ENCODE measurements at regions of chr22 and their contacts with region 1.

Region 1: GRCh38 chr22:40636380-40637182 is at the start of gene MRTFA:
- DNase-seq: peak; percentile 98 to 100 (median 99)
- H3K4me3 ChIP-seq: peak within 1 kb of the TSS; percentile 95 to 98
- H3K4me3 Mint-ChIP-seq: peak within 1 kb of the TSS; percentile 96 to 99 (median 98)
- H3K27ac ChIP-seq: peak within 1 kb of the TSS; percentile 85
- H3K27ac Mint-ChIP-seq: peak within 1 kb of the TSS; percentile 92 to 99 (median 98)
- H3K4me1 ChIP-seq: peaks cover 34% of the 10 kb centered on the region
- H3K4me1 Mint-ChIP-seq: peaks cover 23 to 54% (median 32%) of the 10 kb centered on the region in 4 donors
- H3K27me3 ChIP-seq: no peaks in the 10 kb centered on the region
- H3K27me3 Mint-ChIP-seq: no peaks in the 10 kb centered on the region
- total RNA-seq, gene MRTFA: 79.1 to 91.6 TPM

Region 2: GRCh38 chr22:39917776-39918495 is 718.6 kb before region 1 on chr22:
- CTCF ChIA-PET with region 1: no interaction called
- POLR2A ChIA-PET with region 1: no interaction called
- intact Hi-C with region 1: no loop called
- DNase-seq: no peak
- H3K4me3 ChIP-seq: peak overlapping the region in 1 of 2 donors; percentile 38
- H3K4me3 Mint-ChIP-seq: peak overlapping the region; percentile 60 to 89 (median 79)
- H3K27ac ChIP-seq: peak overlapping the region; percentile 55
- H3K27ac Mint-ChIP-seq: peak overlapping the region in 6 of 7 donors; percentile 90 to 96 (median 92)
- H3K4me1 ChIP-seq: peaks cover 98% of the 10 kb centered on the region
- H3K4me1 Mint-ChIP-seq: peaks cover 78 to 99% (median 89%) of the 10 kb centered on the region in 4 donors
- H3K27me3 ChIP-seq: no peaks in the 10 kb centered on the region
- H3K27me3 Mint-ChIP-seq: peaks cover 0 to 1% of the 10 kb centered on the region in 2 donors

Region 3: DNA sequence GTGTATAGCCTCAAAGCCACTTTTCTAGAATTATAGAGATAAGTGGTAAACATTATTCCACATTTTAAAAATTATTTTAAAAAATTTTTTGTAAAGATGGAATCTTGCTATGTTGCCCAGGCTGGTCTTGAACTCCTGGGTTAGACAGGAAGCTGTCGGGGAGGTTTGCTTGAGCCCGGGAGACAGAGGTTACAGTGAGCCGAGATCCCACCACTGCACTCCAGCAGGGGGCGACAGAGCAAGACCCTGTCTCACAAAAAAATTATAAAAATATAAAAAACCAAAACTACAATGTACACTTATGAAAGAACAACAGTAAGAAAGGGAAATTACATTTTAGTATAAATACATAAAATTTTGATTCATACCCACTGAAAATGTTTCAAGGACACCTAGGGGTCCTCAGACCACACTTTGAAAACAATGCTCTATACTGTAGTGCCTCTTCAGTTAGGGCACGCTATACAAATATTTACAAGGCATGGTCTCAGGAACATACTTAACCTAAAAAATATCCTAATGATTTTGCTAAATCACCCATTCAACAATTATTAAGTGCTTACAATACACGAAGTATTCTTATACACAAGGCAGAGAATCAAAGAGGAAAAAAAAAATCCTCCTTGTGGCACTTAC is 111.2 kb before region 1 on chr22:
- CTCF ChIA-PET with region 1: interaction called, 13 read pairs
- POLR2A ChIA-PET with region 1: interaction called, 58 read pairs
- intact Hi-C with region 1: loop called (anchors 2 kb)
- DNase-seq: peak; percentile 68 to 73 (median 69)
- H3K4me3 ChIP-seq: no peak overlapping the region
- H3K4me3 Mint-ChIP-seq: no peak overlapping the region
- H3K27ac ChIP-seq: no peak overlapping the region
- H3K27ac Mint-ChIP-seq: peak overlapping the region in 5 of 7 donors; percentile 16 to 87 (median 63)
- H3K4me1 ChIP-seq: peaks cover 22% of the 10 kb centered on the region
- H3K4me1 Mint-ChIP-seq: peaks cover 23 to 46% (median 31%) of the 10 kb centered on the region in 4 donors
- H3K27me3 ChIP-seq: no peaks in the 10 kb centered on the region
- H3K27me3 Mint-ChIP-seq: no peaks in the 10 kb centered on the region

Region 4: DNA sequence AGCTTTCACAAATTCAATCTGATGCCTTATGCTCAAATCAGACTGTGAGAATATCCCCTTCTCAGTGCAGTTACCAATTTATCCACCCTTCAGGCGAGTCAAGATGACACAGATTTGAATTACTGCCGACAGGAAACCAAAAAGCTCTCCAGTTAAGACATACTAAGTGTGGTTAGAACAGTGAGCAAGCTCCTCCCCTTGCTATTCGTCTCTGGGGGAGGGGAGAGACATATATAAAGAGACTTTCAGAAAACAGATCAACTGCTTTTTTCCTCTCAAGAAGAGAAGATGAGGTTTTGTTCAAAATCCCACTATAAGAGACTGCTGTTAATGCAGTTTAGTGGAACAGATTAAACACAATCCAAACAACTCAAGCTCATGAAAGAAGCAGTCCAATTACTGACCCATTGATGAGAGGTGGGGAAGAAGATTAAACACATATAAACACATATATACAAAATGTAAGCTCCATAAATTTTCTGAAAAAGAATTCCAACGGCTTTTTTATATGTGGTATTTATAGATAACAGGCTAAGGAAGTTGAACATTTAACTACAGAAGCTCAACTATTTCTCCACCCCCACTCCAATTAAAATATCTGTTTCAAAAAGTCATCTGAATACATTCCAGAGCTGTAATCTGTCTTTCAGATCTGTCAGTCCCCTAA is 102.7 kb before region 1 on chr22:
- CTCF ChIA-PET with region 1: interaction called, 7 read pairs
- POLR2A ChIA-PET with region 1: interaction called, 58 read pairs
- intact Hi-C with region 1: loop called (anchors 2 kb)
- DNase-seq: peak; percentile 71 to 83 (median 77)
- H3K4me3 ChIP-seq: peak overlapping the region; percentile 32 to 61
- H3K4me3 Mint-ChIP-seq: peak overlapping the region; percentile 81 to 93 (median 87)
- H3K27ac ChIP-seq: peak overlapping the region; percentile 50
- H3K27ac Mint-ChIP-seq: peak overlapping the region; percentile 86 to 94 (median 92)
- H3K4me1 ChIP-seq: peaks cover 67% of the 10 kb centered on the region
- H3K4me1 Mint-ChIP-seq: peaks cover 49 to 64% (median 60%) of the 10 kb centered on the region in 4 donors
- H3K27me3 ChIP-seq: no peaks in the 10 kb centered on the region
- H3K27me3 Mint-ChIP-seq: no peaks in the 10 kb centered on the region

Region 5: DNA sequence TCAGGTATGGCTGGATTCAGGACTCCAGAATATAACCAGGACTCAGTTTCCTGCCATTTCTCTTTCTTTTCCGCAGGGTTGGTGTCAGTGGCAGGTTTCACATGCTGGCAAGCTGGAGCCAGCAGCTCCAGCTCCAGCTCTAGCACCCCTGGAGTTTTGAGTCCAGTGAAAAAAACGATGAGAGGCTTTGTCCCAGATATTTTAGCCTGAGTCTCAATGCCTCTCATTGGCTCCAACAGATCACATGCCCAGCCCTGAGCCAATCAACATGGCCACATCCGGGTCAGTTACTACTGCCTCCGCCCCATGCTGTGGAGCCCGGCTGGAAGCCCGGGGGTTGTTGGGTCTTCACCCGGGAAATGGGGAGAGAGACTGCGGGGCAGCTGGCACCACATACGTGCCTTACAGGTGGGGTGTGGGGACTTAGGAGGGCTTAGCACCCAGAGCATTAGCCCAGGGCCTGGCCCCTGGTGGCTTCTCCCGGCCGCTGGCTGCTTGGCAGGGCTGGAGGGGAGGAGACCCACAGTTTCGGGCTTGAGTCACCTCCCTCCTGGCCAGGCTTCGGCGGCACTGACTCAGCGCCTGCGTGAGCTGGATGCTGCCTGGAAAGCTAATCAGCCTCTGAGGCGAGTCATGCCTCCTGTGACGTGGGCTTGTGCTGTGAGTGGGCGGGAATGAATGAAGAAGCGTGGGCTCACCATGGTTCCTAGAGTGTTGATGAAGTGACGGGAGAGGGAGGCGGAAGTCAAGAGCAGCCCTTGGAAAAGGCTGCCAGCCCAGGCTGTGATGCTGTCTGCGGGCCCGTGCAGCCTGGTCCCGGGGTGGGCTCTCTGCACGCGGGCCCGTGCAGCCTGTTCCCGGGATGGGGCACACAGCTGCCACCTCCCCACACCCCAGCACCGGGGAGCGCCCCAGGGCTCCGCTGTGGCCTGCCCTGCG is 15.3 kb after region 1 on chr22:
- CTCF ChIA-PET with region 1: interaction called, 29 read pairs
- POLR2A ChIA-PET with region 1: interaction called, 10 read pairs
- intact Hi-C with region 1: no loop called
- DNase-seq: peak; percentile 72 to 89 (median 76)
- H3K4me3 ChIP-seq: peak overlapping the region in 1 of 2 donors; percentile 62
- H3K4me3 Mint-ChIP-seq: peak overlapping the region; percentile 78 to 92 (median 88)
- H3K27ac ChIP-seq: peak overlapping the region; percentile 60
- H3K27ac Mint-ChIP-seq: peak overlapping the region; percentile 61 to 94 (median 91)
- H3K4me1 ChIP-seq: peaks cover 4% of the 10 kb centered on the region
- H3K4me1 Mint-ChIP-seq: peaks cover 7 to 18% (median 12%) of the 10 kb centered on the region in 4 donors
- H3K27me3 ChIP-seq: no peaks in the 10 kb centered on the region
- H3K27me3 Mint-ChIP-seq: no peaks in the 10 kb centered on the region

Region 6: GRCh38 chr22:40818747-40819598 is 182.4 kb after region 1 on chr22 and contains the start of gene SLC25A17:
- CTCF ChIA-PET with region 1: no interaction called
- POLR2A ChIA-PET with region 1: no interaction called
- intact Hi-C with region 1: loop called (anchors 2 kb)
- DNase-seq: peak; percentile 81 to 84 (median 82)
- H3K4me3 ChIP-seq: peak within 1 kb of the TSS; percentile 92 to 95
- H3K4me3 Mint-ChIP-seq: peak within 1 kb of the TSS; percentile 92 to 99 (median 97)
- H3K27ac ChIP-seq: peak within 1 kb of the TSS; percentile 81
- H3K27ac Mint-ChIP-seq: peak within 1 kb of the TSS; percentile 82 to 98 (median 95)
- H3K4me1 ChIP-seq: peaks cover 27% of the 10 kb centered on the region
- H3K4me1 Mint-ChIP-seq: peaks cover 29 to 46% (median 36%) of the 10 kb centered on the region in 4 donors
- H3K27me3 ChIP-seq: no peaks in the 10 kb centered on the region
- H3K27me3 Mint-ChIP-seq: no peaks in the 10 kb centered on the region
- total RNA-seq, gene SLC25A17: 15.4 to 15.6 TPM

Region 7: DNA sequence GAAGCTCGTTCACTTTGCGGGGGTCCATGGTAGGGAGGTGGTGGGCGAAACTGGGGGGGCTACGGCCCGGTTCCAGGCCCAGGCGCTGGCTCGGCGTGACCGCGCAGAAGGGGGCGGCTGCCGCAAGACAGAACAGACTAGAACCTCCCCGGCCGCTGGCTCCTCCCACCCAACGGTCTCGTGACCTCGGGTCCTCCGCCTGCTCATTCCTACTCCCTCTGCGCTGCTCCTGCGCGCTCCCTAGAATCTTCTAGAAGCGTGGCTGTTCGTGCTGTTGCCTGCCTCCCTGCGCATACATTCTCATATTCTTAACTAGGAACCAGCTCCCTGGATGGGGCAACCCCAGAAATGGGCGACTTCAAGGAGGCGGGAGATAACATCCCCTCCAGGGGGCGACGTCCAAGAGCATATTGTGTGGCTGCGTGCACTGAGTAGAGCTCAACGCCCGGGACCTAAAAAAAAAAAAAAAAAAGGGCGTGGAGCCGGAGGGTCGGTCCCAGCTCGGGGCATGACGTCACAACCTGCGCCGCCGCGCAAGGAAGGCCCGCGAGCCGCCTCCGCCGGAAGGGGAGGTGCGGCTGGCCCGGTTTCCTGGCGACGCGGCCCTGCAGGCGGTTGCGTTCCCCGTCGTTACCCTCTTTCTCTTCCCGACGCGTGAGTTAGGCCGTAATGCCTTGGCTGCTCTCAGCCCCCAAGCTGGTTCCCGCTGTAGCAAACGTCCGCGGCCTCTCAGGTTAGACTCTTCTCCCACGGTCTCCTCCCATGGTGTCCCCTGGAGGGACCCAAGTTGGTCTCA is 220.1 kb after region 1 on chr22 and contains the starts of genes ST13 and XPNPEP3:
- CTCF ChIA-PET with region 1: no interaction called
- POLR2A ChIA-PET with region 1: interaction called, 9 read pairs
- intact Hi-C with region 1: loop called (anchors 2 kb)
- DNase-seq: peak; percentile 97 to 98 (median 98)
- H3K4me3 ChIP-seq: peak within 1 kb of the TSS; percentile 72 to 100
- H3K4me3 Mint-ChIP-seq: peak within 1 kb of the TSS; percentile 96 to 99 (median 98)
- H3K27ac ChIP-seq: peak within 1 kb of the TSS; percentile 99
- H3K27ac Mint-ChIP-seq: peak within 1 kb of the TSS; percentile 98 to 100 (median 100)
- H3K4me1 ChIP-seq: peaks cover 53% of the 10 kb centered on the region
- H3K4me1 Mint-ChIP-seq: peaks cover 23 to 66% (median 45%) of the 10 kb centered on the region in 4 donors
- H3K27me3 ChIP-seq: no peaks in the 10 kb centered on the region
- H3K27me3 Mint-ChIP-seq: peaks cover 0 to 2% of the 10 kb centered on the region in 2 donors
- total RNA-seq, gene ST13: 161 to 168 TPM
- total RNA-seq, gene XPNPEP3: 18.6 to 20.0 TPM

Region 8: GRCh38 chr22:41204992-41205900 is 568.7 kb after region 1 on chr22 and contains the start of gene L3MBTL2:
- CTCF ChIA-PET with region 1: no interaction called
- POLR2A ChIA-PET with region 1: no interaction called
- intact Hi-C with region 1: loop called (anchors 2 kb)
- DNase-seq: peak; percentile 97 to 99 (median 98)
- H3K4me3 ChIP-seq: peak within 1 kb of the TSS; percentile 73 to 95
- H3K4me3 Mint-ChIP-seq: peak within 1 kb of the TSS; percentile 93 to 99 (median 96)
- H3K27ac ChIP-seq: peak within 1 kb of the TSS; percentile 85
- H3K27ac Mint-ChIP-seq: peak within 1 kb of the TSS; percentile 84 to 97 (median 93)
- H3K4me1 ChIP-seq: peaks cover 18% of the 10 kb centered on the region
- H3K4me1 Mint-ChIP-seq: peaks cover 15 to 40% (median 23%) of the 10 kb centered on the region in 4 donors
- H3K27me3 ChIP-seq: no peaks in the 10 kb centered on the region
- H3K27me3 Mint-ChIP-seq: peaks cover 3 to 6% of the 10 kb centered on the region in 2 donors
- total RNA-seq, gene L3MBTL2: 42.7 to 48.2 TPM

Measured in CD4-positive, alpha-beta memory T cell (primary cell).